Body of pancreas (tissue), 4 donors: ENCODE measurements at regions of chr5 and their contacts with region 1.

Region 1: GRCh38 chr5:63963080-63963735 is 963 bp upstream of the HTR1A start:
- DNase-seq: peak; percentile 50 to 71 (median 59)
- ATAC-seq: peak; percentile 67
- H3K4me3 ChIP-seq: no peak overlapping the region
- H3K27ac ChIP-seq: no peak overlapping the region
- H3K4me1 ChIP-seq: peaks cover 12% of the 10 kb centered on the region
- H3K27me3 ChIP-seq: no peaks in the 10 kb centered on the region
- CTCF ChIP-seq: peak; percentile 10 to 68 (median 52)
- POLR2A ChIP-seq: no peak

Region 2: DNA sequence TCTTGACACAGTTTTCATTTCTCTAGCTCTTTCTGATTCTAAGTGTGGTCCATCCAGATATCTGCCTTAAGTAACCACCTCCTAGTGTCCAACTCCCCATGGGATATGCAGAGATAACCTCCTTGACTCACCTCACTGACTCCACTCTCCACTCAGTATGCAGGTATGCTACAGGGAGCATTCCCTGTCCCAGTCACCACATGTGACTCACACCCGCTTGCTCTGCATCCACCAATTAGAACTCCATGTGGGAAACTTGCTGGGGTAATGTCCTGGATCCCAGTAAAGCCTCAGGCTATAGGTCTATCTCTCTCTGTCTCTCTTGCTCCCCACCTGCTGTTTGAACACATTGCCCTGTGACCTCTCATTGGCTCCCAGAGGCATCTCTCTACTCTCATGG is 564.9 kb before region 1 on chr5:
- intact Hi-C with region 1: loop called (anchors 5 kb)
- DNase-seq: no peak
- ATAC-seq: no peak
- H3K4me3 ChIP-seq: no peak overlapping the region
- H3K27ac ChIP-seq: no peak overlapping the region
- H3K4me1 ChIP-seq: no peaks in the 10 kb centered on the region
- H3K27me3 ChIP-seq: no peaks in the 10 kb centered on the region
- CTCF ChIP-seq: no peak
- POLR2A ChIP-seq: no peak

Region 3: DNA sequence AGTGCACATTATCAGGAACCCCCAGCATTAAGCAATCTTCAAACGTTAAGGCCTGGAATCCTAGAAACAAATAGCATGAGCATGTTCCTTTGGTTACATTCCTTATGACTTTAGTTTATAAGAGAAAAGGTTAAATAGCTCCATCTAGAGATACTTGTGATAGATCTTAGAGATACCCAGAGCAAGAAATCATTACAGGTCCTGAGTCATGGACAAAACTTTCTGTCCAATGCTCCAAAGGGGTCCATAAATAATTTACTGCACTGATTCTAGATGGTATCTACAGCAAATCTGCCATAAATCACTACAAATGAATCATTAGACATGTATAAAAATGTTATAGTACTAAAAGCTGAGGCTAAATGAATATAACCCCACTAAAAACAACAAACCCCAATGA is 140.6 kb before region 1 on chr5:
- intact Hi-C with region 1: no loop called
- DNase-seq: no peak
- ATAC-seq: no peak
- H3K4me3 ChIP-seq: no peak overlapping the region
- H3K27ac ChIP-seq: no peak overlapping the region
- H3K4me1 ChIP-seq: peaks cover 15% of the 10 kb centered on the region
- H3K27me3 ChIP-seq: peaks cover 0 to 3% of the 10 kb centered on the region in 2 donors
- CTCF ChIP-seq: no peak
- POLR2A ChIP-seq: no peak